ENCODE measurements at regions of chr9 and their contacts with region 1.

Region 1: GRCh38 chr9:94554439-94555391 is at the start of gene PCAT7:
- DNase-seq: peak; percentile 78
- H3K4me3 ChIP-seq: peak within 1 kb of the TSS; percentile 43
- H3K27ac ChIP-seq: no peak within 1 kb of the TSS
- H3K4me1 ChIP-seq: no peaks in the 10 kb centered on the region
- H3K27me3 ChIP-seq: no peaks in the 10 kb centered on the region
- CTCF ChIP-seq: peak; percentile 68
- total RNA-seq, gene PCAT7: 0.17 TPM in 1 of 2 replicates, not detected in the other

Region 2: DNA sequence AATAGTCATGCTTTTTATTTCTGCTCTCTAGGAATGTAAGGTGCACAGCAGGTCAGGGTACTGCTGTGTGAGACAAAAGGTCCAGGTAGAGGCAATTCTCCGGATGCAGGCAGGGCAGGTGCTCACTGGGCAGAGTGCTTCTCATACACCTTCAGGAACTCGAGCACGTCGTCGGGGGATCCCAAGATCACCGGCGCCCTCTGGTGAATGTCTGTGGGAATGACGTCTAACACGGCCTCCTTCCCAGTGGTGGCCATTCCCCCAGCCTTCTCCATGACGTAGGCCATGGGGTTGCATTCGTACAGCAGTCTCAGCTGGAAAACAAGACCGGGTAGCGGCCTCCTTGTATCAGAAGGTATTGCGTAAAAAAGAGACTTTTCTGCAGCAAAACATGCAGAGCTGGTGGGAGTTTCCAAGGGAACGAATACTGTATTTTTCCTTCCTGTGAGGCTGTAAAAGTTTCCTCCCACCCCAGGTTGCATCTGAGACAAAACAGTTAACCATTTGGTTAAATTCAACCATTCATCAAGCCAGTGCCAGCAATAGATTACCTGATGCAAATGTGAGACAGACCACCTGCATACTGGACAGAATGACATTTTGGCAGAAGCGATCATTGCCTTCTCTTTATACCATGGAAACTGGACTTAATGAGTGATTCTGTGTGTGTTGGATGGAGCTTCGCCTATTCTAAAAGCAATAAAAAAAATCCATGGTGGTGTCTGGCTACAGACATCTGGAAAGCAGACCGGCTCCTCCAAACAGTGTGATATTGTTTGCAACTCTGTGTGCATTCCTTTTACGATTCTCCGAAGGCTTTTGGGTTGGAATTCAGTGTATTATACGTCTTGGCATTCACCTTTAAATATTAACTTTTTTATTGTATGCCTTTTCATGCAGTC is 48.8 kb after region 1 on chr9:
- CTCF ChIA-PET with region 1: interaction called, 7 read pairs
- POLR2A ChIA-PET with region 1: no interaction called
- intact Hi-C with region 1: loop called (anchors 1 kb)
- DNase-seq: peak; percentile 79
- H3K4me3 ChIP-seq: no peak overlapping the region
- H3K27ac ChIP-seq: no peak overlapping the region
- H3K4me1 ChIP-seq: no peaks in the 10 kb centered on the region
- H3K27me3 ChIP-seq: no peaks in the 10 kb centered on the region
- CTCF ChIP-seq: peak; percentile 88

Region 3: DNA sequence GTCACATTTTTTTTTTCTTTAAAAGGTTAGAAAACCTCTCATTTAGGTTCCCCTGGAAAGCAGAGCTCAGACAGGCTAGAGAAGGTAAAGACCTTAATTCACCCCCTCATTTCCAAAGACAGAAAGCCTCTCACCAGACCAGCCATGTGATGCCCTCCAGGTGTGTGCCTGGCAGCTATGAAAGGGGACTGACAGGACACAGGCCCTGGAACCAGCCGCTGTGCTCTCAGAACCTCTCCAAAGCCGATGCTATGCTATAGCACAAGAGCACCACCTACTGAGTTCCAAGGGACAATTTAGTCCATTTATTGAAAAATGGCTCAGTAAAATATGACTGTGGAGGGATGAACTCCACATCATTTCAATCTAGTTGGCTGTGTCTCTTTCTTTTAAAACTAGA is 714.0 kb after region 1 on chr9:
- CTCF ChIA-PET with region 1: no interaction called
- POLR2A ChIA-PET with region 1: no interaction called
- intact Hi-C with region 1: no loop called
- DNase-seq: peak; percentile 58
- H3K4me3 ChIP-seq: no peak overlapping the region
- H3K27ac ChIP-seq: no peak overlapping the region
- H3K4me1 ChIP-seq: peaks cover 7% of the 10 kb centered on the region
- H3K27me3 ChIP-seq: no peaks in the 10 kb centered on the region
- CTCF ChIP-seq: peak; percentile 61

Measured in A673 (cell line).